ENCODE measurements at regions of chr4 and their contacts with region 1.

Region 1: GRCh38 chr4:127604949-127605709 is 27.6 kb upstream of the INTU start:
- DNase-seq: no peak
- H3K4me3 ChIP-seq: no peak overlapping the region
- H3K27me3 ChIP-seq: peaks cover 3% of the 10 kb centered on the region; the same call in 1 of the 2 replicates
- CTCF ChIP-seq: peak; percentile 33; the same call in 1 of the 2 replicates

Region 2: GRCh38 chr4:127370604-127371003 is 234.5 kb before region 1 on chr4:
- CTCF ChIA-PET with region 1: no interaction called
- POLR2A ChIA-PET with region 1: no interaction called
- DNase-seq: no peak
- H3K4me3 ChIP-seq: no peak overlapping the region
- H3K27me3 ChIP-seq: no peaks in the 10 kb centered on the region
- CTCF ChIP-seq: no peak

Region 3: GRCh38 chr4:127708985-127709384 is 103.9 kb after region 1 on chr4:
- CTCF ChIA-PET with region 1: interaction called, 10 read pairs
- POLR2A ChIA-PET with region 1: no interaction called
- DNase-seq: peak; percentile 11
- H3K4me3 ChIP-seq: no peak overlapping the region
- H3K27me3 ChIP-seq: no peaks in the 10 kb centered on the region
- CTCF ChIP-seq: no peak

Region 4: DNA sequence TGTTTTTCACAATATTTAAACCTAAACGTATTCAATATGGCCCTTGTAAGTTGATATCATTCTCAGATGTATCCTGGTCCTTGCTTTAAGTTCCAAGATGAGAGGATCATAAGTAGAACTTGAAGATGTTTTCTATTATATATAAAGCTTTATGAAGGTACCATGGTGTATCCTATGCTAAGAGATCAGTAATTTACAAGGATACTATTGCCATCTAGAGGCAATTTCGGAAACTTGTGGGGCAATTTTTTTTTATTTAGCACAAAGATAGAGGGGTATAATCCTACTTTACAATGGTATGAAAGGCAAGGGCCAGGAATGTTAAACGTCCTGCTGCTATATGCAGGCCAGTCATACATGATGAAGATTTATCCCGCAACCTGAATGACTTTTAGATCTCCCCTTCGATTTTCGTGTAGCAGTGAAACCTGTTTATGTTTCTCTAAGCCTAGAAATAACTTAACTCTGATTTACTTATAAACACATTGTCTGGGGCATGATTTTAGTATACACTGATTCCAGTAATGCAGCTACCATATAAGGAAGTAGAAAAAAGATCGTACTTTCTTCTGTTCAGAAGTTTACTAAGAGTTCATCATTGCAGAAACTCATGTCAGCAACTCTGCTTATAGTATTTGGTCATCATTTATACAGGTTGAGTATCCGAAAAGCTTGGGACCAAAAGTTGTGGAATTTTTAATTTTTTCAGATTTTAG is 127.6 kb after region 1 on chr4:
- CTCF ChIA-PET with region 1: interaction called, 173 read pairs
- POLR2A ChIA-PET with region 1: no interaction called
- DNase-seq: no peak
- H3K4me3 ChIP-seq: no peak overlapping the region
- H3K27me3 ChIP-seq: no peaks in the 10 kb centered on the region
- CTCF ChIP-seq: peak; percentile 63

Measured in BJ (cell line).